Dendritic cell treated with granulocyte-macrophage colony-stimulating factor and Interleukin-4, amounts not matched to agents 40 ng/mL and 50 ng/mL, for 4 days (primary cell): ENCODE measurements at regions of chr3 and their contacts with region 1.

Region 1: GRCh38 chr3:161423911-161424522 is 52.7 kb upstream of the SPTSSB start:
- H3K4me3 Mint-ChIP-seq: no peak overlapping the region
- H3K27ac Mint-ChIP-seq: no peak overlapping the region
- H3K4me1 Mint-ChIP-seq: no peaks in the 10 kb centered on the region
- H3K27me3 Mint-ChIP-seq: peaks cover 4% of the 10 kb centered on the region

Region 2: DNA sequence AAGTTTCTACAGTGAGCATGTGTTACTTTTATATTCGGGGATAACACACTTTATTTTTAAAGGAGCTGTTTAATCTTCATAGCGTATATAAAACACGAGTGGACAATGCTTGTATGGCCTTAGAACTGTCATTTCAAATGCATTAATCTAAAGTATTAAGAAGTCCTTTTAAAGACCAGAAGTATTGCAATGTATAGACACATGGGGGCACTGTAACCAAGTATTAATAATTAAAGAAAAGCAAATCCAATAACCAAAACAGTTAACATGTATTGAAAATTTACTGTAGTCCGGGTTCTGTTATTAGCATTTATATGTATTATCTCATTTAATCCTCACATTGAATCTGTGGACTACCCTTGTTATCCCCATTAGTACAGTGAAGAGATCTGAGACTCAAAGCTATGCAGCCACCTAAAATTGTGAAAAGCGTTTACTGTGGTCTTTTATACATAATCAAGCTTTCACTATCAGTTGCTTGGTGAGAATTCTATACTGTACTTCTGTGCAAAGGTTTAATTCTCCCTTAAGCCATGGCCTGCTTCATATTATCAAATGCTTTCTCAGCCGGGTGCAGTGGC is 737.0 kb before region 1 on chr3:
- intact Hi-C with region 1: loop called (anchors 5 kb)
- H3K4me3 Mint-ChIP-seq: no peak overlapping the region
- H3K27ac Mint-ChIP-seq: no peak overlapping the region
- H3K4me1 Mint-ChIP-seq: peaks cover 5% of the 10 kb centered on the region
- H3K27me3 Mint-ChIP-seq: no peaks in the 10 kb centered on the region

Region 3: DNA sequence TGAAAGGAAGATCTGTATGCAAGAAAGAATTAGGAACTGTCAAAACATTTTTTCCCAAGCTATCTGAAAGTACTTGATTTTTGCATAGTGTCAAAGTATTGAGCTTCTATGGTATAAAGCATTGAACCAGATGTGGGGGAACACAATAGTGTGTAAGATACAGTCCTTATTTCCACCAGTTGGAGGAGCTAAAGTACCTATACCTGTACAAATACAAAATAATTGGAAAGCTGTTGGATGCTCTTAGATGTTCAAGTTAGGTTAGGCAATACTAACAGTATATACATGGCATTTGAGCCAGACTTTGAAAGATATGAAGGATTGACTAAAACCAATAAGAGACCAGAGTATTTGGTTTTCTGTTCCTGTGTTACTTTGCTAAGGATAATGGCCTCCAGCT is 467.2 kb before region 1 on chr3:
- intact Hi-C with region 1: loop called (anchors 10 kb)
- H3K4me3 Mint-ChIP-seq: no peak overlapping the region
- H3K27ac Mint-ChIP-seq: no peak overlapping the region
- H3K4me1 Mint-ChIP-seq: peaks cover 9% of the 10 kb centered on the region
- H3K27me3 Mint-ChIP-seq: no peaks in the 10 kb centered on the region

Region 4: GRCh38 chr3:161471211-161471610 is 47.2 kb after region 1 on chr3:
- intact Hi-C with region 1: no loop called
- H3K4me3 Mint-ChIP-seq: no peak overlapping the region
- H3K27ac Mint-ChIP-seq: no peak overlapping the region
- H3K4me1 Mint-ChIP-seq: peaks cover 5% of the 10 kb centered on the region
- H3K27me3 Mint-ChIP-seq: no peaks in the 10 kb centered on the region